ENCODE measurements at regions of chr12 and their contacts with region 1.

Region 1: GRCh38 chr12:120469450-120470149 is at the start of gene SRSF9:
- DNase-seq: peak; percentile 98
- H3K4me3 ChIP-seq: peak within 1 kb of the TSS; percentile 98
- H3K27ac ChIP-seq: peak within 1 kb of the TSS; percentile 69
- H3K4me1 ChIP-seq: peaks cover 48% of the 10 kb centered on the region
- CTCF ChIP-seq: peak; percentile 84
- total RNA-seq, gene SRSF9: 181 and 203 TPM in 2 replicates

Region 2: GRCh38 chr12:120156315-120157259 is 313.0 kb before region 1 on chr12:
- CTCF ChIA-PET with region 1: no interaction called
- POLR2A ChIA-PET with region 1: no interaction called
- intact Hi-C with region 1: no loop called
- DNase-seq: no peak
- H3K4me3 ChIP-seq: no peak overlapping the region
- H3K27ac ChIP-seq: no peak overlapping the region
- H3K4me1 ChIP-seq: no peaks in the 10 kb centered on the region
- CTCF ChIP-seq: no peak

Region 3: DNA sequence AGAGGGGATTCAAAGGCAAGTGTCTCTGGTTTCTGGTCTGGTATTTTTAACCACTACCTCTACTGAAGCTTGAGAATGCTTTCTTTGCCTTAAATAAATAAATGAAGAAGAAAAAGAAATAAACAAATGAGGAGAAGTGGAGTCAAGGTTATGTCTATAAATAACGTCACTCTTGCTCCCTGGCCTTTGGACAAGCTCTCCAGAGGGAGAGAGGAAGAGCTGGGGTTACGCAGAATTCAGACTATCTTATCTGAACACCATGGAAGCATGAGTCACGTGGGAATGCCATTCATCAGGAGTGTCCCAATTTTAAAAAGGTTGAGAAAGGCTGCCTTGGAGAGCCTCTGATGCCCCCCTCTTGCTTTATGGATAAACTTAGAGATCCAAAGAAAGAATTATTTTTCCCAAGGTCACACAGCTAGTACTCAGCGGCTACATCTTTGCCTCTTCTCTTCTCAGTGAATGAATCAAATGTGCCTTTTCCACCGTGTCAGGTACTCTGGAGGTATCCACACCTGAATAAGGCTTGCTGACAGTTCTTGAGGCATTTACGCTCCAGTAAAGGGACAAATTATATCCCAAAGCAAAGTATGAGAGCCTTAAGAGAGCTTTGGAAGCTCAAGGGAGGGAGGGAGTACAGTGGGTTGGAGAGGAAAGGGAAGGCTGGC is 87.7 kb before region 1 on chr12:
- CTCF ChIA-PET with region 1: no interaction called
- POLR2A ChIA-PET with region 1: no interaction called
- intact Hi-C with region 1: no loop called
- DNase-seq: no peak
- H3K4me3 ChIP-seq: no peak overlapping the region
- H3K27ac ChIP-seq: no peak overlapping the region
- H3K4me1 ChIP-seq: peaks cover 5% of the 10 kb centered on the region
- CTCF ChIP-seq: no peak

Region 4: GRCh38 chr12:120495723-120496412 is 26.3 kb after region 1 on chr12 and contains the start of gene DYNLL1:
- CTCF ChIA-PET with region 1: no interaction called
- POLR2A ChIA-PET with region 1: interaction called, 4 read pairs
- intact Hi-C with region 1: loop called (anchors 1 kb)
- DNase-seq: peak; percentile 98
- H3K4me3 ChIP-seq: peak within 1 kb of the TSS; percentile 79
- H3K27ac ChIP-seq: peak within 1 kb of the TSS; percentile 71
- H3K4me1 ChIP-seq: peaks cover 23% of the 10 kb centered on the region
- CTCF ChIP-seq: no peak
- total RNA-seq, gene DYNLL1: 354 and 400 TPM in 2 replicates

Region 5: GRCh38 chr12:120515496-120515895 is 45.9 kb after region 1 on chr12:
- CTCF ChIA-PET with region 1: no interaction called
- POLR2A ChIA-PET with region 1: no interaction called
- intact Hi-C with region 1: no loop called
- DNase-seq: no peak
- H3K4me3 ChIP-seq: no peak overlapping the region
- H3K27ac ChIP-seq: no peak overlapping the region
- H3K4me1 ChIP-seq: no peaks in the 10 kb centered on the region
- CTCF ChIP-seq: no peak

Region 6: DNA sequence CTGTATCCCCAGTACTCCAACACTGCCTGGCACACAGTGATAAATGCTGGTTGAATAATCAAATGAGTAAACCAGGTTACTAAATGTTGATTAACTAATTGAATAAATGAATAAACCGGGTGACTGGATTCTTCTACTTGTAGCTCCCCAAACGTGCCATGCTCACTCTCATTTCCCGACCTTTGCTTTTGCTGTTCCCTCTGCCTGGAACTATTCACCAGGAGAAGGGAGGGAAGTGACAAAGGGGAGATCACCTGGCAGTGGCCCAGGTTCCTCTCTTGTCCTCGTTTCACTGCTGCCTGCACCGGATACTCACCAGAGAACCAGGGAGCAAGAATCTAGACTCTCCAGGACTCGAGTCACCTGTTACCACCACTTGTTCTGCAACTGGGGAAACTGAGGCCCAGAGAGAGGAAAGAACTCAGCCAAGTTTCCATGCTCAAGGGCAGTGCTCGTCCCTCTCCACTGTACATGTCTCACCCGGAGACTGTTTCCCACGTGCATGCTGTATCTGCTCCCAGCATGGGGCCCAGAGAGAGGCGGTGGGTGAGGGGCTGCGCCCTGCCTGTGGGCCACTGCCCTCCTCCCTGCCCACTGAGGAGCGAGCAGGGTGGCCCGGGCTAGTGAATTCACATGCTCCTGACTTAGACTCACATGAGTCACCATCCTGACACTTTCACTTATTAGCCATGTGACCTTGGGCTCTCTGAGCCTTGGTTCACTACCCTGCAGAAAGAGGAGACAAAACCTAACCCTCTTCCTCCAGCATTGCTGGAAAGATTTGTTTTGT is 129.3 kb after region 1 on chr12:
- CTCF ChIA-PET with region 1: no interaction called
- POLR2A ChIA-PET with region 1: no interaction called
- intact Hi-C with region 1: no loop called
- DNase-seq: no peak
- H3K4me3 ChIP-seq: no peak overlapping the region
- H3K27ac ChIP-seq: no peak overlapping the region
- H3K4me1 ChIP-seq: no peaks in the 10 kb centered on the region
- CTCF ChIP-seq: no peak

Region 7: GRCh38 chr12:121015825-121016766 is 546.5 kb after region 1 on chr12 and contains the start of gene C12orf43:
- CTCF ChIA-PET with region 1: no interaction called
- POLR2A ChIA-PET with region 1: interaction called, 12 read pairs
- intact Hi-C with region 1: no loop called
- DNase-seq: peak; percentile 95
- H3K4me3 ChIP-seq: peak within 1 kb of the TSS; percentile 90
- H3K27ac ChIP-seq: peak within 1 kb of the TSS; percentile 58
- H3K4me1 ChIP-seq: peaks cover 11% of the 10 kb centered on the region
- CTCF ChIP-seq: no peak
- total RNA-seq, gene C12orf43: 24.7 and 30.0 TPM in 2 replicates

Measured in OCI-LY7 (cell line).